Heart left ventricle (tissue), 16 donors: ENCODE measurements at regions of chr9 and their contacts with region 1.

Region 1: GRCh38 chr9:33106827-33107621 is 30.6 kb upstream of the SMU1 start:
- DNase-seq: peak; percentile 67 to 78 (median 76)
- ATAC-seq: peak; percentile 43 to 75 (median 69)
- H3K4me3 ChIP-seq: no peak overlapping the region
- H3K27ac ChIP-seq: peak overlapping the region; percentile 62 to 93 (median 79)
- H3K4me1 ChIP-seq: peaks cover 7 to 56% (median 30%) of the 10 kb centered on the region in 12 donors
- H3K27me3 ChIP-seq: no peaks in the 10 kb centered on the region
- CTCF ChIP-seq: no peak
- POLR2A ChIP-seq: no peak

Region 2: GRCh38 chr9:33139421-33140228 is 32.6 kb after region 1 on chr9:
- intact Hi-C with region 1: loop called in 1 of 10 experiments (anchors 2 kb)
- DNase-seq: peak; percentile 83 to 91 (median 88)
- ATAC-seq: peak; percentile 65 to 83 (median 80)
- H3K4me3 ChIP-seq: peak overlapping the region in 3 of 12 donors; percentile 0 to 11 (median 7)
- H3K27ac ChIP-seq: peak overlapping the region; percentile 38 to 84 (median 76)
- H3K4me1 ChIP-seq: peaks cover 35 to 100% (median 97%) of the 10 kb centered on the region in 12 donors
- H3K27me3 ChIP-seq: no peaks in the 10 kb centered on the region
- CTCF ChIP-seq: no peak
- POLR2A ChIP-seq: no peak